Right ventricle myocardium inferior (tissue), 1 donor: ENCODE measurements at regions of chr12 and their contacts with region 1.

Region 1: GRCh38 chr12:58346032-58346632 is 404.8 kb downstream of the ATP23 start:
- DNase-seq: no peak
- ATAC-seq: no peak

Region 2: GRCh38 chr12:58105225-58106119 is 240.7 kb before region 1 on chr12:
- intact Hi-C with region 1: no loop called
- DNase-seq: no peak
- ATAC-seq: peak; percentile 74

Region 3: GRCh38 chr12:58196971-58197370 is 149.2 kb before region 1 on chr12:
- intact Hi-C with region 1: no loop called
- DNase-seq: no peak
- ATAC-seq: no peak

Region 4: DNA sequence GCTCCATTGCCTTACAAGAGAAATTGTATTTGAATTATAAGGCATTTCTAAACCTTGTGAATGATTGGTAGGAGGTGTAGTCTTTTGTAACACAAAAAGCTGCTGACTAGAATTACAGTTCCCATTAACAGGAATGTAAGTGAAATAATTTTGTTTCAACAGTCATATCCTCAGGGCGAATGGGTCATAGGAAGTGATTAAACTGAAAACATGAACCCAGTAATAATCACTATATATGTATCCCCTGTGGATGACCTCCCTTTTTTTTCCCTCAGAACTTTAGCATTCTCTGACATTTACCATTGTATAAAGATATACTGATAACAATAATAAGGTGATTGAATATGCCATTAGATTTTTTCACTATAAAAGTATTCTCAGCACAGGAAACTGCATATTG is 92.5 kb before region 1 on chr12:
- intact Hi-C with region 1: no loop called
- DNase-seq: no peak
- ATAC-seq: no peak

Region 5: DNA sequence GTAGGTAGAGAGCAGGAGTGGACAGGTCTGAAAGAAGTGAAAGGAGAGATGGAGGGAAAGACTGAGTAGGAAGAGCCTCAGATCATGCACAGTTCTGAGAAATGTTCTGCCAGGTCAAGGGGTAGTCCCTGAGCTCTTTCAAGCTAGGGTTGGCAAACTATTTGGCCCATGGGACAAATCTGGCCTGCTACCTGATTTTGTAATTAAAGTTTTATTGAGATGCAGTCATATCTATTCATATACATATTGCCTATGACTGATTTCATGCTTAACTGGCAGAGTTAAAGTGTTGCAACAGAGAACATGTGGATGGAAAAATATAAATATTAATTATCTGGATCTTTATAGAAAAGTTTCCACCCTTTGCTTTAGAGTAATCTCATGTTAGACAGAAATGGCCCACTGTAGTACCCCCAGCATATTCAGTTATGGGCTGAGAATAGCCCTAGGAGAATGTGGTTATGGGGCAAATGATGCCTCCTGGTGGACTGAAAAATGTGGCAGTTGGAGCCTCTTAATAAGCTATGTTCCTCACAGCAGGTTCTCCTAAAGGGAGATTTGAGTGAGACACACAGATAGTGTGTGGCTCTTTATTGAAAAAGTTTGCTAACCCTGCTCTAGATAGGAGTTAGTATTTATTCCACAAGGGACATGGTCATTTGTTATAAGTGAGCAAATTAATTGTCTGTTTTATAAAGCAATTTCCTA is 97.3 kb after region 1 on chr12:
- intact Hi-C with region 1: loop called (anchors 5 kb)
- DNase-seq: no peak
- ATAC-seq: peak; percentile 16

Region 6: DNA sequence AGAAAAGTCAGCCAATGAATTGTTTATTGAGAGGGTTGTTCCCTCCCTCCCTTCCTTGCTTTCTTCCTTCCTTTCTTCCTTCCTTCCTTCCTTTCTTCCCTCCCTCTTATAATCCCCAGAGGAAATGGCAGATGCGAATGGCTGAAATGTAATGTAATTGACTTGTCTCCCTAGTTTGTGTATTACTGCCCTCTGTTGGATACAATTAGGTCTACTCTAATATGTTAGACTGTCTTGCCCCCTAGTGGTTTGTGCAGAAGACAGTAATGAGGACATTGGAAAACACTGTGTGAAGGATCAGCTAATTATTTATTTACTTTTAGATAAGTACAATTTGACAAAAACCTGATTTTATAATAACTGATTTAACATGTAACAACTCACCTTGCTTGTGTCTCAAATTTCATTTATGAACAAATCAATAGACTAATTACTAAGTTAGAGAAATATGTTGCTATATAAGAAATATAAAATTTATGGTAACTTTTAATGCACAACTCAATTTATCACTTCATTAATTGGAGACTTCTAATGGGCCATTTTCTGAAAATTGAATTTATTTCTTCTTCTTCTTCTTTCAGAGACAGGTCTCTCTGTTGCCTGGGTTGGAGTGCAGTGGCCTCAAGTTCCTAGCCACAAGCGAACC is 804.0 kb after region 1 on chr12:
- intact Hi-C with region 1: loop called (anchors 2 kb)
- DNase-seq: no peak
- ATAC-seq: peak; percentile 92